ENCODE measurements at regions of chr10 and their contacts with region 1.

Region 1: GRCh38 chr10:124152916-124153826 is 59.8 kb upstream of the CHST15 start:
- DNase-seq: peak; percentile 95
- ATAC-seq: peak; percentile 77
- H3K4me3 ChIP-seq: peak overlapping the region; percentile 59
- H3K27ac ChIP-seq: peak overlapping the region; percentile 99
- H3K4me1 ChIP-seq: peaks cover 37% of the 10 kb centered on the region
- H3K27me3 ChIP-seq: no peaks in the 10 kb centered on the region
- CTCF ChIP-seq: no peak

Region 2: DNA sequence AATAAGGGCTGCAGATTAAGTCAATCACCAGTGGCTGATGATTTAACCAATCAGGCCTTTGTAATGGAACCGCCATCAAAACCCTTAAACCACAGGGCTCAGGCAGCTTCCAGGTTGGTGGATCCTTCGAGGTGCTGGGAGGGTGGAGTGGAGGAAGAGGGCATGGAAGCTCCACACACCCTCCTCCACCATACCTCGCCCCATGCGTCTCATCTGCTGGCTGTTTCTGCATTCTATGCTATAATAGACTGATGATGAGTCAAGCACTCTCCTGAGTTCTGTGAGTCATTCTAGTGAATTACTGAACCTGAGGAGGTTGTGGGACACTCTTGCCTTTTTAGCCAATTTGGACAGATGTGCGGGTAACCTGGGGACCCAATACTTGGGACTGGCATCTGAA is 103.7 kb before region 1 on chr10:
- CTCF ChIA-PET with region 1: no interaction called
- POLR2A ChIA-PET with region 1: no interaction called
- intact Hi-C with region 1: loop called (anchors 2 kb)
- DNase-seq: peak; percentile 73
- ATAC-seq: peak; percentile 87
- H3K4me3 ChIP-seq: no peak overlapping the region
- H3K27ac ChIP-seq: peak overlapping the region; percentile 36; the same call in 1 of the 2 replicates
- H3K4me1 ChIP-seq: peaks cover 26% of the 10 kb centered on the region
- H3K27me3 ChIP-seq: no peaks in the 10 kb centered on the region
- CTCF ChIP-seq: no peak

Region 3: GRCh38 chr10:124106241-124106879 is 46.8 kb before region 1 on chr10:
- CTCF ChIA-PET with region 1: no interaction called
- POLR2A ChIA-PET with region 1: interaction called, 3 read pairs
- intact Hi-C with region 1: loop called (anchors 2 kb)
- DNase-seq: peak; percentile 91
- ATAC-seq: peak; percentile 77
- H3K4me3 ChIP-seq: peak overlapping the region; percentile 53
- H3K27ac ChIP-seq: peak overlapping the region; percentile 78
- H3K4me1 ChIP-seq: peaks cover 26% of the 10 kb centered on the region
- H3K27me3 ChIP-seq: no peaks in the 10 kb centered on the region
- CTCF ChIP-seq: no peak

Measured in PC-3 (cell line).